ENCODE measurements at regions of chr15 and their contacts with region 1.

Region 1: DNA sequence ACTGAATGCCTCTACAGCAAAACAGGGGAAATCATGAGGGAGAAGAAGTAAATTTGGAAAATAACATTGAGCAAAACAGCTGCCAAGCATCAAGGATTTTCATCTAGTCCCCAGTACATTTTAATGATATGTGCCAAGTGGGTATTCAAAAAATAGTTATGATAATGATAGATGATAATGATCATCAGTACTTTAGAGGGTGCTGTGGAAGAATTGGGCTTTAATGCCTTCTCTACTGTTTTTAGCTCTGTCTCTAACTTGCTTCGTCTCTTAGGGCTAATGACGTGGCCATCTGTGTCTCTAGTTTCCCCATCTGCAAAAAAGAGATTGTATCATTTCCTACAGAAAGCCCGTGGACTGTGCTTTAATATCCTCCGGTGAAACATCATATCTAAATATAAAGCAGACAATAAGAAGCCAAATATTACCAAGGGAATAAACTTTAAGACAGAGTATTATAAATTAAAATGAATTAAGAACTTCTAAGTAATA is 10.2 kb upstream of the FSIP1 start:
- DNase-seq: no peak
- ATAC-seq: no peak

Region 2: DNA sequence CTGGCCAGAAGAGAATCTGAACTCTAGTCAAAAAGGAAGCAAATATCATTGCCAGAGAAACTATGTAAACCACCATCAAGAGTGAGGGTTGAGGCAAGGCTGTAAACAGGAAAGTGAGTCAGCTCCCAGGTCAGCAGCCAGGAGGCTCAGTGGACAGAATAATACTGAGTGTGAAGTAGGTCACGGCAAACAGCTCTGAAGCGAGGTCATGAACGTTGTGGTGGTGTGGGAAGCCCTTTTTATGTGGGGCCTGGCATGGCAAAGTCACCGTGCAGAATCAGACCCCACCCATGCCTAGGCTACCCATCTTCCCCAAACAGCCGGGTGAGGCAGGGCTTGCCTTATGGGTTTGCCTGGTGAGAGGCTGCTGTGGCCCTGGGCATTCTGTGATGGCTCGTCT is 168.1 kb before region 1 on chr15:
- intact Hi-C with region 1: no loop called
- DNase-seq: peak; percentile 68
- ATAC-seq: peak; percentile 61

Region 3: GRCh38 chr15:39854161-39854560 is 61.3 kb after region 1 on chr15:
- intact Hi-C with region 1: loop called (anchors 1 kb)
- DNase-seq: no peak
- ATAC-seq: no peak